Natural killer cell (primary cell): ENCODE measurements at regions of chr14 and their contacts with region 1.

Region 1: DNA sequence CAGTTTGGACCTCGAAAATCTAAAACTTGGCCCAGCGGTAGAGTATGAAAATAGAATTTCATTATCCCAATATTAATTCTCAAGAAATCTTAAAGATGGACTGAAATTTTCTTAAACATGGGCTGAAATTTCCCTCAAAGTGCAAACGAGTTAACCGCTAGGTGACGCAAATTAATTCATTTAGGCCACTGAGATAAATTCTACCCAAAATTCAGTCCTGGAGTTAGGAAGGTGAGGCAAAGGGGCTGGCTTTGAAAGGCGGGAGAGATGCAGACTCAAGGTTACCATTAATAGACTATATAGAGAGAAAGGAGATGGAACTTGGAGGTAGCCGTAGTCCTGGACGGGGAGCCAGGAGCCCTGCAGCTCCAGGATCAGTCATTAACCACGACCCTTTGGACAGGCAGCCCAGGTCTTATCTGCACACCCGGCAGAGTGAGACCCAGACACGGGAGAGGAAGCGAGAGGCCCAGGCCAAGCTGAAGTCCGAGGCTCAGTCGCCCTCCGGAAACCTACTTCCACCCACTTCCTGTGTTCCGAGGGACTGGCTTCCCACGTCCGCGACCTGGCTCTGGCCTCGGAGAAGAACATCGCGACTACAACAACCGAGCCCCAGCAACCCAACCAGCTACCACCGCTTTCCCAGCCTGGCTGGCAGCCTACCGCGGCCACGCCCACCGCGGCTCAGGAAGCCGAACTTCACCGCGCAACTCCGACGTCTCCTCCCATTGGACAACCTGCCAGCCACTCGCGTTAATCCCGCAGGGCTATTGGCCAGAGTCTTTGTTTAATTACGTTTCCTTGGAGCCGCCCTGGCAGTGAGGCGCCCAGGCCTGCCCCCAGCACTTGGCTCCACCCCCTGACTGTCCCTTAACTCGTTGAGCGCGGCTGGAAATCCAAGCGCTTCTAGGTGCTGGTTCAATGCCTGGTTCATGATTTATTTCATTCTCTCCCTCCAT is at the start of gene EFCAB11:
- DNase-seq: peak; percentile 93 to 98
- ATAC-seq: peak; percentile 77 to 92 (median 78)
- H3K4me3 ChIP-seq: peak within 1 kb of the TSS; percentile 59
- H3K4me3 Mint-ChIP-seq: peak within 1 kb of the TSS; percentile 99
- H3K27ac ChIP-seq: peak within 1 kb of the TSS; percentile 98
- H3K27ac Mint-ChIP-seq: peak within 1 kb of the TSS; percentile 97
- H3K4me1 ChIP-seq: peaks cover 24% of the 10 kb centered on the region
- H3K4me1 Mint-ChIP-seq: peaks cover 40 to 46% of the 10 kb centered on the region in 2 donors
- H3K27me3 ChIP-seq: no peaks in the 10 kb centered on the region
- H3K27me3 Mint-ChIP-seq: no peaks in the 10 kb centered on the region
- CTCF ChIP-seq: no peak
- total RNA-seq, gene EFCAB11: 3.9 to 5.2 (median 4.0) TPM

Region 2: DNA sequence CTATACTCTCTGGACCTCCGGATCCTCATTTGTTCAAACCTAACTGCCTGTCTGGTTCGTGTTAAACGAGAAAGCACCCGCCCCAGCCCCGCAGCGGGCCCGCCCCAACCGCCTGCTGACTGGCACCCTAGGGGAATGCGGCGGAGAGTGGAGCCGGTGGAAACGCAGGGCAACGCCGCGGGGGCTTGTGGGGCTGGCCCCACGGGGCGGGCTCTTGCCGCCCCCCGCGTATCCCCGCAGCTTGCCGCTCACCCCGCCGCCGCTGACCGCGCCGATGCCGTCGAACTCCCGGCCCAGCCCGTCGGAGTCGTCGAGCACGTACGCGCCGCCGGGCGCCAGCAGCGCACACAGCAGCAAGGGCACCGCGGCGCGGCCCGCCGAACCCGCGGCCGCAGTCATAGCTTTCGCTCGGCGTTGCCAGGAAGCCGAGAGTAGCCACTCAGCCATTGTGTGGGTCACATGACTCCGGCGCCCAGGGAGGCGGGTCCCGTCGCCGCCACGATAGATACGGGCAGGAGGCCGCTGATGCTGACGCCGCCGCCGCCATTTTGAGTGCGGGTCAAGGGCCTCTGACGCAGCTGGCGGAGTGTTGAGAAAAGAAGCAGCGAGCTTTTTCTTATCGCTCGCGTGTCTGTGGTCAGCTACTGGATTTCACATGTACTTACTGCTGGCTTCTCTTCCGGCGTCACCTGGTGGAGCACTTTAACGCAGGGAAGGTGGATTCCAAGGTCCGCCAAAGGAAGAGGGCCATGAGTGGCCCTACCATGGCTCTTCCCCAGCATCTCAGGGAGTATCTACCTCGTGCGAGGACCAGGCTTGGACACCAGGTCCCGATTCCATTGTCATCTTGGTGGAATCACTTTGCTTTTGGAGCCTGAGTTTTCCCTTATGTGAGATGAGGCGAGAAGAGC is 1961.4 kb before region 1 on chr14 and contains the start of gene GALC:
- intact Hi-C with region 1: loop called (anchors 10 kb)
- DNase-seq: peak; percentile 97
- ATAC-seq: peak; percentile 78 to 88 (median 85)
- H3K4me3 ChIP-seq: peak within 1 kb of the TSS; percentile 78
- H3K4me3 Mint-ChIP-seq: peak within 1 kb of the TSS; percentile 98
- H3K27ac ChIP-seq: peak within 1 kb of the TSS; percentile 98
- H3K27ac Mint-ChIP-seq: peak within 1 kb of the TSS; percentile 93 to 97
- H3K4me1 ChIP-seq: peaks cover 36% of the 10 kb centered on the region
- H3K4me1 Mint-ChIP-seq: peaks cover 70 to 77% of the 10 kb centered on the region in 2 donors
- H3K27me3 ChIP-seq: no peaks in the 10 kb centered on the region
- H3K27me3 Mint-ChIP-seq: no peaks in the 10 kb centered on the region
- CTCF ChIP-seq: no peak
- total RNA-seq, gene GALC: 50.3 to 78.2 (median 67.2) TPM

Region 3: GRCh38 chr14:89359477-89360222 is 594.7 kb before region 1 on chr14:
- intact Hi-C with region 1: loop called (anchors 5 kb)
- DNase-seq: no peak
- ATAC-seq: no peak
- H3K4me3 ChIP-seq: no peak overlapping the region
- H3K4me3 Mint-ChIP-seq: peak overlapping the region; percentile 67
- H3K27ac ChIP-seq: no peak overlapping the region
- H3K27ac Mint-ChIP-seq: peak overlapping the region; percentile 67 to 85
- H3K4me1 ChIP-seq: peaks cover 25% of the 10 kb centered on the region
- H3K4me1 Mint-ChIP-seq: peaks cover 37 to 58% of the 10 kb centered on the region in 2 donors
- H3K27me3 ChIP-seq: no peaks in the 10 kb centered on the region
- H3K27me3 Mint-ChIP-seq: no peaks in the 10 kb centered on the region
- CTCF ChIP-seq: no peak

Region 4: DNA sequence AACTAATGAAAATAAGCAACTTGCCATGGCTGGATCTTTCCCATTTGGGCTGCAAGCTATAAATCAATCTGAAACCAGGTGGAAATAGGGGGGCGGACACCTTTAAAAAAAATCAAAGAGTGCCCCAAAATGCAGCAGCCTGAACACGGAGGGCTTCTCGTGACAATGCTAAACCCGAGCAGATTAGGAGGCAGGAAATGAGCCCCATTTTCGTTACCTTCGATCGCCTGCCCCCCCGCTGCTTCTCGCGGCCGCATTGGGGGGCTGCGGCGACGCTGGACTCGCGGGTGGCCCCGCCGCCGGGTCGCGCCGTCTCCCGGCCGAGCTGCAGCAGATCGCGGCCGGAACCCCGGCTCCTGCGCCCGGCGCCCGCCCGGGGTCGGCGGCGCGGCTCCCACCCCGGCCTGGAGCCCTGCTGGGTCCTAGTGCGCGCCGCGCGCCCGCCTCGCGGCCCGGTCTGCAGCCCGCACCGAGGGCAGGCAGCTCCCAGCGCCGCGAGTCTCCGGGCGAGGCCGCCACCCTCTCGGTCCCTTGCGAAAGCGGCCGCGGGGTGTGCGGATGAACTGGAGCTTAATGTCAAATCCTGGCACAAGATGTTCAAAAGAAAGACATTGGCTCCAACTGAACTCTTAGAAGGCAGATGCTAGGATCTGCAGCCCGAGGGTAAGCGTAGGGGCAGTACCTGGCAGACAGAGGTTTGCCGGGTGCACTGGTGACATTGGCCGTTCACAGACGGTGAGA is 335.4 kb before region 1 on chr14:
- intact Hi-C with region 1: loop called (anchors 2 kb)
- DNase-seq: peak; percentile 70 to 84
- ATAC-seq: peak; percentile 38 to 71 (median 68)
- H3K4me3 ChIP-seq: peak overlapping the region; percentile 85
- H3K4me3 Mint-ChIP-seq: peak overlapping the region; percentile 97
- H3K27ac ChIP-seq: peak overlapping the region; percentile 96
- H3K27ac Mint-ChIP-seq: peak overlapping the region; percentile 90 to 98
- H3K4me1 ChIP-seq: peaks cover 24% of the 10 kb centered on the region
- H3K4me1 Mint-ChIP-seq: peaks cover 55 to 60% of the 10 kb centered on the region in 2 donors
- H3K27me3 ChIP-seq: no peaks in the 10 kb centered on the region
- H3K27me3 Mint-ChIP-seq: no peaks in the 10 kb centered on the region
- CTCF ChIP-seq: no peak

Region 5: GRCh38 chr14:89915114-89915878 is 39.1 kb before region 1 on chr14:
- intact Hi-C with region 1: no loop called
- DNase-seq: peak; percentile 40 to 79
- ATAC-seq: peak; percentile 75 to 78 (median 77)
- H3K4me3 ChIP-seq: no peak overlapping the region
- H3K4me3 Mint-ChIP-seq: no peak overlapping the region
- H3K27ac ChIP-seq: no peak overlapping the region
- H3K27ac Mint-ChIP-seq: no peak overlapping the region
- H3K4me1 ChIP-seq: no peaks in the 10 kb centered on the region
- H3K4me1 Mint-ChIP-seq: no peaks in the 10 kb centered on the region
- H3K27me3 ChIP-seq: no peaks in the 10 kb centered on the region
- H3K27me3 Mint-ChIP-seq: peaks cover 9 to 16% of the 10 kb centered on the region in 2 donors
- CTCF ChIP-seq: peak; percentile 98

Region 6: GRCh38 chr14:90023176-90023896 is 69.0 kb after region 1 on chr14:
- intact Hi-C with region 1: no loop called
- DNase-seq: no peak
- ATAC-seq: no peak
- H3K4me3 ChIP-seq: no peak overlapping the region
- H3K4me3 Mint-ChIP-seq: no peak overlapping the region
- H3K27ac ChIP-seq: no peak overlapping the region
- H3K27ac Mint-ChIP-seq: peak overlapping the region in 1 of 2 donors; percentile 14
- H3K4me1 ChIP-seq: no peaks in the 10 kb centered on the region
- H3K4me1 Mint-ChIP-seq: peaks cover 6 to 19% of the 10 kb centered on the region in 2 donors
- H3K27me3 ChIP-seq: no peaks in the 10 kb centered on the region
- H3K27me3 Mint-ChIP-seq: no peaks in the 10 kb centered on the region
- CTCF ChIP-seq: no peak

Region 7: DNA sequence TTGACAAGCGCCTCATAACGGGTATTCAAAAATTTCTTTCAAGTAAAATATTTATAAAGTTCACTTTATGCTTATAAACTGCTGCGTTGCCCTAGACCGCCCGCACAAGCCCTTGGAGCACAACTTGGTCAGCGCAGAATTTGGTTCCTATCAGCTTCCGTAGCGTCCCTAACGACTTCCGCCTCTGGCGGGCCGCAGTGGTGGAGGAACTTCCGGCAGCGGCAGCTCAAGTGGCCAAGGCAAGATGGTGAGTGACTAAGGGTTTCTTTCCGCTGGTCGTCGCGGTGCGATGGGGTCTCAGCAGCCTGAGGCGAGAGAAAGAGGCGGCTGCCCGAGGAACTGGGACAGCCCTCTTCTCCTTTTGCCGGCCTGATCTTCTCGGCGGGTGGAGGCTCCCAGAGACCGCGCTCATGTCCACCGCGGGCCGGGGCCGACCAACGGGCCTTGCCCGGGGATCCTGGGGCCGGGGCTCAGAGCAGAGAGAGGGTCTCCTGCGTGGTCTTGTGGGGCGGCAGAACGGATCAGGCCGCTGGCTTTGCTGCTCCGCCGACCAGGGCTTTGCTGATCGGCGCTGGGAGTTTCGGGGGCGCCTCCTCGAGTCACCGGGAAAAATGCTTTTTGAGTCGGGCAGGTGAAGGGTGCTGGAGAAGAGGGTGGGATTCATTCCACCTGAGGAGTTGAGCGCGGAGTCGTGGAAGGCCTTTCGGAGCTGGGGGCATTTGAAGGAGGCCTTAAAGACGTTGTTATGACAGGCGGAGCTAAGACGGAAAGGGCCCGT is 302.2 kb after region 1 on chr14 and contains the start of gene PSMC1:
- intact Hi-C with region 1: loop called (anchors 1 kb)
- DNase-seq: peak; percentile 82 to 90
- ATAC-seq: peak; percentile 94 to 99 (median 95)
- H3K4me3 ChIP-seq: peak within 1 kb of the TSS; percentile 89
- H3K4me3 Mint-ChIP-seq: peak within 1 kb of the TSS; percentile 99
- H3K27ac ChIP-seq: peak within 1 kb of the TSS; percentile 71
- H3K27ac Mint-ChIP-seq: peak within 1 kb of the TSS; percentile 94 to 98
- H3K4me1 ChIP-seq: peaks cover 6% of the 10 kb centered on the region
- H3K4me1 Mint-ChIP-seq: peaks cover 32 to 33% of the 10 kb centered on the region in 2 donors
- H3K27me3 ChIP-seq: peaks cover 2% of the 10 kb centered on the region
- H3K27me3 Mint-ChIP-seq: peaks cover 14 to 17% of the 10 kb centered on the region in 2 donors
- CTCF ChIP-seq: no peak
- total RNA-seq, gene PSMC1: 84.1 to 97.1 (median 93.1) TPM

Region 8: GRCh38 chr14:90383075-90383730 is 428.9 kb after region 1 on chr14:
- intact Hi-C with region 1: loop called (anchors 5 kb)
- DNase-seq: peak; percentile 96 to 98
- ATAC-seq: peak; percentile 84 to 94 (median 88)
- H3K4me3 ChIP-seq: peak overlapping the region; percentile 80
- H3K4me3 Mint-ChIP-seq: no peak overlapping the region
- H3K27ac ChIP-seq: peak overlapping the region; percentile 96
- H3K27ac Mint-ChIP-seq: no peak overlapping the region
- H3K4me1 ChIP-seq: peaks cover 25% of the 10 kb centered on the region
- H3K4me1 Mint-ChIP-seq: no peaks in the 10 kb centered on the region
- H3K27me3 ChIP-seq: no peaks in the 10 kb centered on the region
- H3K27me3 Mint-ChIP-seq: no peaks in the 10 kb centered on the region
- CTCF ChIP-seq: no peak